HepG2 (cell line): ENCODE measurements at regions of chr21 and their contacts with region 1.

Region 1: GRCh38 chr21:45330075-45330781 is 42.5 kb upstream of the POFUT2 start:
- DNase-seq: peak; percentile 89
- ATAC-seq: peak; percentile 85
- H3K4me3 ChIP-seq: peak overlapping the region; percentile 25 to 72 (median 56); a peak in 5 of 6 replicates
- H3K27ac ChIP-seq: peak overlapping the region; percentile 72
- H3K4me1 ChIP-seq: peaks cover 79% of the 10 kb centered on the region
- H3K27me3 ChIP-seq: no peaks in the 10 kb centered on the region
- CTCF ChIP-seq: no peak
- EP300 ChIP-seq: peak in 1 of 2 experiments; percentile 70; a peak in 2 of 4 replicates
- POLR2A ChIP-seq: no peak; a peak in 1 of 4 replicates
- RAD21 ChIP-seq: peak; percentile 29; the same call in 1 of the 2 replicates

Region 2: GRCh38 chr21:45319461-45320211 is 10.6 kb before region 1 on chr21:
- CTCF ChIA-PET with region 1: no interaction called
- POLR2A ChIA-PET with region 1: interaction called, 37 read pairs
- in situ Hi-C with region 1: no loop called
- intact Hi-C with region 1: no loop called
- DNase-seq: no peak
- ATAC-seq: no peak
- H3K4me3 ChIP-seq: no peak overlapping the region
- H3K27ac ChIP-seq: peak overlapping the region; percentile 49
- H3K4me1 ChIP-seq: peaks cover 72% of the 10 kb centered on the region
- H3K27me3 ChIP-seq: no peaks in the 10 kb centered on the region
- CTCF ChIP-seq: no peak
- EP300 ChIP-seq: no peak
- POLR2A ChIP-seq: no peak
- RAD21 ChIP-seq: no peak

Region 3: DNA sequence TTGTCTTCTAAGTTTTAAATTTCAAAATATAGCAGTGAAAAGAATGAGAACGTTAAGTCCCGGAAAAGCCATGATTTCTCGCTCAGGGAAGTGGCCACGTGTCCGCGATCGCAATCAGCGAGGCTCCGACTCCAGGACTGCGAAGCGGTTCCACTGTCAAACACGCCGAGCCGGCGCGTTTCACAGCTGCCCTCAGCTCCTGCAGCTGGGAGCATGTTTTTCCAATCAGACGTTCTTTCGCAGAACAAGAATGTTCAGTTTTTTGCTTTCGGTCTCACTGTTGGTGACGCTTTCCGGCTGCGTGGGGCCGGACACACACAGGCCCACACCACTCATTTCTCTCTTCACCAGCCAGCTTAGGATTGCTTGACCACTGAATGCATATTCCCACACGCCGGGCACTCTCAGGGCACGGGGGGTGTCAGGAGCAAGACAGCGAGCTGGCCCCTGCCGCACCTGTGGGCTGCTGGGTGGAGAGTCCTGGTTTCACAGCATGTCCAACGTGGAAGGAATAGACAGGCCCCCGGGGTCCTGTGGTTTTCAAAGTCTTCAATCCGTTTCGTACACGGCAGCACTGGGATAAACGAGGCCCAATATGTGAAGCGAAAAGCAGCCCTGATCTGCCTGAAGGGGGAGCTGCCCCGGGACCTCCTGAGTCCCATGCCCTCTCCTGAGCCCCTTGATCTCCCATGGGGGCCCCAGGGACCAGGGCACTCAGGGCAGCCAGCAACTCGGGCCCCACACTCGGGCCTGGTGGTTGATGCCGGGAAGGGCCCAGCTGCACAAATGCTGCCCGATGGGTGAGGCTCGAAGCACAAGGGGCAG is 27.4 kb after region 1 on chr21:
- CTCF ChIA-PET with region 1: no interaction called
- POLR2A ChIA-PET with region 1: interaction called, 11 read pairs
- in situ Hi-C with region 1: no loop called
- intact Hi-C with region 1: no loop called
- DNase-seq: no peak
- ATAC-seq: peak; percentile 17; the same call in 2 of the 3 replicates
- H3K4me3 ChIP-seq: no peak overlapping the region
- H3K27ac ChIP-seq: peak overlapping the region; percentile 82
- H3K4me1 ChIP-seq: peaks cover 68% of the 10 kb centered on the region
- H3K27me3 ChIP-seq: no peaks in the 10 kb centered on the region
- CTCF ChIP-seq: no peak
- EP300 ChIP-seq: no peak
- POLR2A ChIP-seq: no peak
- RAD21 ChIP-seq: 0 out of 2 replicates have a peak, but pooled peaks have one; percentile 12

Region 4: DNA sequence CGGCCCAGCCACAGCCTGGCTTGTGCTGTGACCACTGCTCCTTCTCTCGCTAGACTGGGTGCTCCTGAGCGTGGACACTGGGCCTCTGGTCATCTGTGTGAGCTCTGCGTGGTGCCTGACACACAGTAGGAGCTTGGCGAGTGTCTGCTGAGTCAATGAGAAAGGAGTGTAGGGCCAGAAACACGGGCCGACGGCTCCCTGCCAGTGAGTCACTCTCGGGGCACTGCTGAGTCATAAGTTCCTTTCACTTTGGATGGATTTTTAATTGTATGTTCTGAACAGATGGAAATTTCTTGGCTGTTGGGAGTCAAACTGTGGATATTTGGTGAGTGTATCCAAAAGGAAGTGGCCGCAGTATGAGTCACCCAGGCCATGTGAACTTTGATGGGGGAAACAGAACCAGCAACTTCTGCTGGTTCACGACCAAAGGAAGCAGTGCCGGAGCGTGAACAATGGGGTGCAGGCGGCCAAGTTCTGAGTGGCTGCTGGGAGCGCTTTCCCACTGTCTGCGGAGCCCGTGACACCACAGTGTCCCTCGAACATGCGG is 33.8 kb after region 1 on chr21:
- CTCF ChIA-PET with region 1: no interaction called
- POLR2A ChIA-PET with region 1: interaction called, 10 read pairs
- in situ Hi-C with region 1: no loop called
- intact Hi-C with region 1: loop called (anchors 1 kb)
- DNase-seq: peak; percentile 82
- ATAC-seq: no peak
- H3K4me3 ChIP-seq: no peak overlapping the region
- H3K27ac ChIP-seq: peak overlapping the region; percentile 59
- H3K4me1 ChIP-seq: peaks cover 84% of the 10 kb centered on the region
- H3K27me3 ChIP-seq: no peaks in the 10 kb centered on the region
- CTCF ChIP-seq: no peak
- EP300 ChIP-seq: peak in 1 of 2 experiments; percentile 20; a peak in 1 of 4 replicates
- POLR2A ChIP-seq: no peak
- RAD21 ChIP-seq: no peak

Region 5: DNA sequence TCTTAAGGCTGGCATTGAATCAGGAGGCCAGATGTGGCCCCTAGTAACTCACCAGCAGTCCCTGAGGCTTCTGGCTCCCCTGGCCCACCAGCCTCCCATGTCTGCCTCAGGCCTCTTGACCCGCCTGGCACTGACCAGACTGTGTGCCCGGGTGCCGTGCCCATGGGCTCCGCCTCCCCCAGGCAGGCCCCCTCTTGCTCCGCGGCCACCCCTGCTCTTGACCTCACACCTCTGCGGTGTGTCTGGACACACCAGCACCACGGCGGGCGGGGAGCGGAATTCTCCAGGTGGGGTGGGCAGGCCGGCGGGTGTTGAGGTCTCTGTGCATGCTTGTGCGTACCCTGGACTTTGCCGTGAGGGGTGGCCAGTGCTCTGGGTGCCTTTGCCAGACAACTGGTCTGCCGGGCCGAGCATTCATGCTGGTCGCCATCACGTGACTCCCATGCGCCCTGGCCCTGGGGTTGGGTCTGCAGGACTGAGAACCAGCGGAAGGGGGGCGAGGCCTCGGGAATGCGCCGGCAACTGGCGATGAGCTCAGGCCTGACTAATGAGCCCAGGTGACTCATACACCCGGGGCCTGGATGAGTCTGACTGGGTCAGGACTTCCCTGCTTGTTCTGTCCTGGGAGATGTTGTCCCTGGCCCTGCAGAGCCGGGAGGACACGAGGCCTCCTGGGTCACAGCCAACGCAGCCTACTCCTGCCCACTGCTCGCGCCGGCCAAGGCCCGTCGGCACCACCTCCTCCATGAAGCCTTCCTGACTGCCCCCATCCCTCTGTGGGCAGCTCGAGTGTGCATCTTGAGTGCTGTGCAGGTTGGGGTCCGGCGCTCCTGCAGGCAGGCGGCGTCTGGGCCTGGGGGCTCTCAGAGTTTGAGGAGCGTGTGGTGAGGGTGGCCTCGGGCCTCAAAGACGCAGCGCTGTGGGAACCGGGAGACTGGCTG is 97.4 kb after region 1 on chr21:
- CTCF ChIA-PET with region 1: no interaction called
- POLR2A ChIA-PET with region 1: interaction called, 10 read pairs
- in situ Hi-C with region 1: no loop called
- intact Hi-C with region 1: no loop called
- DNase-seq: peak; percentile 93
- ATAC-seq: peak; percentile 67
- H3K4me3 ChIP-seq: peak overlapping the region in 2 of 3 experiments; percentile 31 to 42; a peak in 1 of 6 replicates
- H3K27ac ChIP-seq: peak overlapping the region; percentile 88
- H3K4me1 ChIP-seq: peaks cover 94% of the 10 kb centered on the region
- H3K27me3 ChIP-seq: no peaks in the 10 kb centered on the region
- CTCF ChIP-seq: peak; percentile 36; the same call in 1 of the 2 replicates
- EP300 ChIP-seq: peak in 1 of 2 experiments; percentile 64; a peak in 1 of 4 replicates
- POLR2A ChIP-seq: no peak
- RAD21 ChIP-seq: no peak